ENCODE measurements at regions of chr1 and their contacts with region 1.

Region 1: GRCh38 chr1:202276081-202276715 is 65.5 kb downstream of the UBE2T start:
- DNase-seq: peak in 1 of 2 donors; percentile 16
- H3K4me3 ChIP-seq: no peak overlapping the region
- H3K27ac ChIP-seq: no peak overlapping the region
- H3K4me1 ChIP-seq: no peaks in the 10 kb centered on the region
- H3K27me3 ChIP-seq: no peaks in the 10 kb centered on the region
- CTCF ChIP-seq: no peak
- POLR2A ChIP-seq: no peak

Region 2: DNA sequence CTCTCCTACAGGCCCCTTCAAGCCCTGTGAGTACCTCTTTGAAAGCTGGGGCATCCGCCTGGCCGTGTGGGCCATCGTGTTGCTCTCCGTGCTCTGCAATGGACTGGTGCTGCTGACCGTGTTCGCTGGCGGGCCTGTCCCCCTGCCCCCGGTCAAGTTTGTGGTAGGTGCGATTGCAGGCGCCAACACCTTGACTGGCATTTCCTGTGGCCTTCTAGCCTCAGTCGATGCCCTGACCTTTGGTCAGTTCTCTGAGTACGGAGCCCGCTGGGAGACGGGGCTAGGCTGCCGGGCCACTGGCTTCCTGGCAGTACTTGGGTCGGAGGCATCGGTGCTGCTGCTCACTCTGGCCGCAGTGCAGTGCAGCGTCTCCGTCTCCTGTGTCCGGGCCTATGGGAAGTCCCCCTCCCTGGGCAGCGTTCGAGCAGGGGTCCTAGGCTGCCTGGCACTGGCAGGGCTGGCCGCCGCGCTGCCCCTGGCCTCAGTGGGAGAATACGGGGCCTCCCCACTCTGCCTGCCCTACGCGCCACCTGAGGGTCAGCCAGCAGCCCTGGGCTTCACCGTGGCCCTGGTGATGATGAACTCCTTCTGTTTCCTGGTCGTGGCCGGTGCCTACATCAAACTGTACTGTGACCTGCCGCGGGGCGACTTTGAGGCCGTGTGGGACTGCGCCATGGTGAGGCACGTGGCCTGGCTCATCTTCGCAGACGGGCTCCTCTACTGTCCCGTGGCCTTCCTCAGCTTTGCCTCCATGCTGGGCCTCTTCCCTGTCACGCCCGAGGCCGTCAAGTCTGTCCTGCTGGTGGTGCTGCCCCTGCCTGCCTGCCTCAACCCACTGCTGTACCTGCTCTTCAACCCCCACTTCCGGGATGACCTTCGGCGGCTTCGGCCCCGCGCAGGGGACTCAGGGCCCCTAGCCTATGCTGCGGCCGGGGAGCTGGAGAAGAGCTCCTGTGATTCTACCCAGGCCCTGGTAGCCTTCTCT is 42.0 kb after region 1 on chr1:
- intact Hi-C with region 1: loop called (anchors 1 kb)
- DNase-seq: no peak
- H3K4me3 ChIP-seq: no peak overlapping the region
- H3K27ac ChIP-seq: no peak overlapping the region
- H3K4me1 ChIP-seq: no peaks in the 10 kb centered on the region
- H3K27me3 ChIP-seq: peaks cover 0 to 2% of the 10 kb centered on the region in 2 donors
- CTCF ChIP-seq: no peak
- POLR2A ChIP-seq: no peak

Measured in breast epithelium (tissue), 4 donors.